Right ventricle myocardium superior (tissue), 1 donor: ENCODE measurements at regions of chr10 and their contacts with region 1.

Region 1: GRCh38 chr10:132536971-132537712 is 445 bp upstream of the INPP5A start:
- DNase-seq: peak; percentile 100
- ATAC-seq: peak; percentile 94

Region 2: DNA sequence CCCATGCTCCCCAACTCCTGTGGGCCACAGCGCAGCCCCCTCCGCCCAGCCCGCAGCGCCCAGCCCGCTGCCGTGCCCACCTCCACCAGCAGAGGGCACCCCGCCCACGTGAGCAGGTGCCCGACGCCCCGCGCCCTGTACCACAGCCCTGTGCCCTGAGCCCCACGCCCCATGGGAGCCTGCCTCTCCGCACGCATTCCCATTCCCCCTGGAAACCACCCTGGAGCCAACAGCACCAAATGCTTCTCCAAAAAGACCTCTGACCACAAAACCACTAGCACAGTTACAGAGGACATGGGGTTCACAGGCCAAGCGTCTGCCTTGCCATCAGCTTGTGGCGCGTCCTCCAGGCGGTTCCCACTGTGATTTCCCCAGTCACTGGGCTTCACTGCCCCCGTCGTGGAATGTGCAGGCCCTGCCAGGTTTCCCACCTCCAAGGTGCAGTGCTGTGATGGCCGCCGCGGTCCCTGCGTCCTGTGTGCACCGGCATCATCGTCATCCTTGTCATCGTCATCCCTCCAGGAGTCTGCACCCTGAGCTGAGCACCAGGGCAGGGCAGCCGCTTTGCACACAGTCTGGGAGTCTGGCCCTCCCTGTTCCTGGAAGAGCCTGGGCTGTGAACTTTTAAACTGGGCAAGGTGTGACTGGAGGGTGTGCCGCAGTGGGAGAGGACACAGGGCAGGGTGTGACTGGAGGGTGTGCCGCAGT is 78.4 kb before region 1 on chr10:
- intact Hi-C with region 1: loop called (anchors 5 kb)
- DNase-seq: peak; percentile 81
- ATAC-seq: peak; percentile 68

Region 3: GRCh38 chr10:132516771-132517725 is 20.1 kb before region 1 on chr10:
- intact Hi-C with region 1: loop called (anchors 2 kb)
- DNase-seq: peak; percentile 94
- ATAC-seq: peak; percentile 81

Region 4: DNA sequence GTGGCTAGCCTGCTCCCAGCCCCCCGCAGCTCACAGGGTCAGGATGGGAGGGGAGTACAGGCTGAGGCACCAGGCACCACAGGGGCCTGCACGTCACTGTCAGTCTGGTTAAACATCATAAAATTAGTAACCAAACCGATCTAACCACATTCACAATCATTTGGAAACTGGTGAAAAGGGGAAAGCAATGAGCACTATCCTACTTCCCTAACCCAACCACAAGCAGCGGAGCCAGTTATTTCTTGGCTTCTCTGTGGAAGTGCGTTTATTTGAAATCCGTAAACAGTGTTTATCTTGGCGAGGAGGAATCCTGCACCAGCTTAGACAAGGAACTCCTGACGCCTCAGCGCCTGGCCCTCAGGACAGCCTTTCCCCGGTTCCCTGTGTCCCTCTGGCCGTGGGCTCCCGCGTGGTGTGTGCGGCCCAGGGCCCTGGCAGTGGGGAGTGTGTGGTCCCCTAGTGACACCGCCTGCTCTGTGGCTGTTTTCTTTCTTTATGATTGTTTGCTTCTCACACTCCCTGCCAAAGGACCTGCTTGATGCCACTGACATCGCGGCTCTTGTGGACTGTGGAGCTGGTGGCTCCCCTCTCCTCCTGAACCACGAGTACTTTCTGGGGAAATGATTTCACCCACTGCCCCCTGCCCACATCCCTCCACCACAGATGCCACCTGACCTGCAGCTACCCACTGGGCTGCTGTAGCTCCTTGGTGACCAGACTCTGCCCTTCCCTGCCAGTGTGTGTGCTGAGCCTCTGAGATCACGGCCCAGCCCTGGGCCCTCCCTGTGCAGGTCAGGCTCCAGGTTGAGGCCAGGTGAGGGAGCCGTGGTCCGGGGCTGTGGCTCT is 38.4 kb after region 1 on chr10:
- intact Hi-C with region 1: loop called (anchors 5 kb)
- DNase-seq: peak; percentile 64
- ATAC-seq: peak; percentile 28

Region 5: DNA sequence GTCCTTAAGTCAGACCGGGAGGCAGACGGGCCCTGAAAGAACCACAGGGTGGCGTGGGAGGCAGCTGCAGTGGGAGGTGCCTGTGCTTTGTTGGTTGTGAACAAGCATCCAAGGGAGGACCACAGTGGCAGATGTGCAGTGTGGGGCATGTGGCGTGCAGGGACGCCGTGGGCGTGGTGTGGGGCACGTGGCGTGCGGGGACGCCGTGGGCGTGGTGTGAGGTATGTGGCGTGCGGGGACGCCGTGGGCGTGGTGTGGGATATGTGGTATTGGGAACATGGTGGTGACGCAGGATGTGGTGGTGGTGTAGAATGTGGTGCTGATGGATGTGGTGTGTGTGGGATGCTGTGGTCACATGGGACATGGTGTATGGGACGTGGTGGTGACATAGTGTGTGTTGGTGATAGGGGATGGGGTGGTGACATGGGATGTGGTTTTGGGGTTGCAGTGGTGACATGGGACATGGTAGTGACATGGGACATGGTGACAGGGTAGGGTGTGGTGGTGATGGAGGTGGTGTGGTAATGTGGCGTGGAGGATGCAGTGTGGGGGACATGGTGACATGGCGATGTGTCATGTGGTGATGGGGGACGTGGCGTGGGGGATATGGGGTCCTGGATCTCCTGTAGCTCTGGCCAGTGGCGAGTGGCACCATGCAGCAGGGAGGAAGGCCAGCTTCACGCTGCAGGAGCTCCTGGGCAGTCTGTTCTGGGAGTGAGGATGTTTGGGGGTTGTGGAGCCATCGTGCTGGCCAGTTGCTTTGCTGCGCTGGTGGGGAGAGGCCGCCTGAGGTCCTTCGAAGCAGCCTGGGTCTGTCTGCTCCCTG is 79.2 kb after region 1 on chr10:
- intact Hi-C with region 1: no loop called
- DNase-seq: no peak
- ATAC-seq: no peak